Common myeloid progenitor, CD34-positive (primary cell): ENCODE measurements at regions of chr21 and their contacts with region 1.

Region 1: DNA sequence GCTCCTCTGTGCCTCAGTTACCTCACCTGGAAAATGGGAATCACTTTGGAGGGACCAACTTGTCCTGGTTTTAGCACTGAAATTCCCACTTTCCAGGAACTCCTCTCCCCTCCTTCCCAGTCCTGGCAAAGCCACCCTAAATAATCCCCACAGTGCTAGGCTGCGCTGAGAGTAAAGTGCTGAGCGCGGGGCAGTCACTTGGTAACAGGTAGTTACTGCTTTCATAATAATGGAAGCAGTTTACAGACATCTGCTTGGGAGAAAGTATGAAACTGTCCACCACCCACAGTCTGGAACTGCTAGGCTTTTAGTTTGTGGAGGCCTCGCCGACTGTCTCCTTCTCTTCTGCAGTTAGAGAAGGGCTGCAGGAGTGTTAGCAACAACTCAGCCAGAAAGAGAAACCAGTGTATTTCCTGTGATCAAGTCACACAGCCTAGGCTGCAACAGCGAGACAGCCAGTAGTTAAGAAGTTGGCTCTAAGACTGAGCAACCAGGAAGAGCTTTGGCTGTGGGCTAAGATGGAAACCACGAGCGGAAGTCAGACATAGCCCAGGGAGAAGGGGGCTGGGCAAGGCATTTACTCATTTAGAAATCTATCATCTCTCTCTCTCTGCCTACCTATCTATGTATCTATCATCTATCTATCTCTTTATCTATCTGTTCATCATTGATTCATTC is 30.8 kb upstream of the ABCG1 start:
- DNase-seq: peak; percentile 85 to 93 (median 92)
- H3K4me3 ChIP-seq: peak overlapping the region in 6 of 7 experiments; percentile 13 to 58 (median 31)
- H3K27ac ChIP-seq: peak overlapping the region in 1 of 2 experiments; percentile 73
- H3K4me1 ChIP-seq: peaks cover 21 to 78% (median 59%) of the 10 kb centered on the region in 4 experiments
- H3K27me3 ChIP-seq: no peaks in the 10 kb centered on the region

Region 2: DNA sequence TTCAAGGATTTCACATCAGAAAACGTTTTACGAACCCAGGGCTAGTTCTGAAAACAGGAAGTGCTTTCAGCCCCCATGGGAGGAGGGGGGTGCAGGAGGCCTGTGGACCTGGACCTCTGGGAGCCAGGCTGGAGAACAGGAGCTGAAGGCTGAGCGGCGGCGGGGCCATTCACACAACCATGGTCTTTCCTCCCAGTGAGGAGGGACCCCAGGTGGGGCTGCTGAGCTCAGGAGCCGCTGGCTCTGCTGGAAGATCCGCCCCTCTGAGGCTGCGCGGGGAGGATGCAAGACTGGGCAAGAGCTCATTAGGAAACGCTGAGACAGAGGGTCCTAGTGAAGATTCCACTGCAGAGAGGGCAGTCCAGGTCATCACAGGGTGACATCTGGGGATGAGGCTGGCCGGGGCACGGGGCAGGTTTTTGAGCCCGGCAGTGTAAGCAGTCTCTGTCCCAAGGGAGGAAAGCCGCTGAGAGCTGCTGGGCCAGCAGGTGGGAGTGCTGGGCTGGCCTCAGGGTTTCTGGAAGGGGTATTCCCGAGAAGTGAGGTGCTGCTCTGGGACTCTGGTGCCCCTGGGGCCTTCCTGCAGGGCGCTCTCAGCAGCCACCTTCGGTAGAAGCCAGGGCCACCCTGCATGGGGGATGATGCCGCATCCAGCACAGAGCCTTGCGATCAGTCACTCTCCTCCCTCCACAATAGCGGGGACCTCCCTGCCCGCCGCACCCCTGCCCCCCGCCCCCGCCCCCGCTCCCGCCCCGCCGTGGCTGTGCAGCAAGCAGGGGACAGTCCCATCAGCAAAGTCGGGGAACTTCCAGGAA is 818.8 kb before region 1 on chr21:
- CTCF ChIA-PET with region 1: no interaction called
- POLR2A ChIA-PET with region 1: no interaction called
- DNase-seq: peak; percentile 51 to 70 (median 59)
- H3K4me3 ChIP-seq: peak overlapping the region in 6 of 7 experiments; percentile 9 to 80 (median 56)
- H3K27ac ChIP-seq: no peak overlapping the region
- H3K4me1 ChIP-seq: peaks cover 6 to 23% (median 10%) of the 10 kb centered on the region in 4 experiments
- H3K27me3 ChIP-seq: peaks cover 0 to 2% (median 0%) of the 10 kb centered on the region in 5 experiments

Region 3: DNA sequence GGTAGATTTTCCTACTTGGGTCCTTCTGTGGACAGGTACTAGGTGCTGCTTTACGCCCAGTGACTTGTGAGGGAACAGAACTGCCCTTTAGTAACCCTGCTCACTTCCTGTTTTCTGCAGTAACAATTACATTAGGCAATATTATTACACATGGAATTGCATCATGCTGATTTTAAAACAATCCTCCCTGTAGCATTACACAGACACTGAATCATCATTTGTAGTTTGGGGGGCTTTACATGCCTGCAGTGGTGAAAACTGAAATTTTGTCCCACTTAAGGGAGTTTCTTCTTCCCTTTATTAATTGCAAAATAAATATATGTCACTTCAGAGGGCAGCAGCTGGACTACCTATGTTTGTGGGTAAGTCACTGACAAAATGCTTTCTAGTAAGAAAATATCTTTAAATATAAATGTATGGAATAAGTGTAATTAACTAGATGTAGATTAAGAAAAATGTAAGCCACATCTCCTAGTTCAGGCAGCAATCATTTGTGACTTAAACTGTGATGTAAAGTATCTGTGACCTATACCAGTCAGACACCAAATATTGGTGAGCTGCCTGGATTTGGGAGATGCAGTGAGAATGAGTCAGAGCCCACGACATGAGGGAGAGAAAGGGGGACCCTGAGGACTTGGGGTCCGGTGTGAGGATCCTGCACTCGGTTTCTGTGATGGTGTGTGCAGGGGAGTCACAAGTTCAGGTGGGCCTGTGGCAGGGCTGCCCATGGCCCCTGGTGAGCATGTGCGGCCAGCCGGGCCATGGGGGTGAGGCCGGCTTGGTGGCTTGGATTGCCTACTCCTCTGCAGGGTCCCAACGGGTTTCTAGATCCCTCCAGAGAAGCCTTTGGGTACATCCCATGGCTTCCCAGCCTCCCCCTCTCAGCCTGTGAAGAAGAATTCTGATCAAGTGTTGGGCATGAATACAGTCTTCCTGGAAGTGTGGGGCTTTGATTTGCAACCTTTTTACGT is 11.7 kb after region 1 on chr21:
- CTCF ChIA-PET with region 1: interaction called, 13 read pairs
- POLR2A ChIA-PET with region 1: interaction called, 3 read pairs
- DNase-seq: peak; percentile 57 to 92 (median 85)
- H3K4me3 ChIP-seq: peak overlapping the region in 1 of 7 experiments; percentile 11
- H3K27ac ChIP-seq: no peak overlapping the region
- H3K4me1 ChIP-seq: peaks cover 16 to 32% (median 23%) of the 10 kb centered on the region in 4 experiments
- H3K27me3 ChIP-seq: no peaks in the 10 kb centered on the region